WTC11 (cell line): ENCODE measurements at regions of chr1 and their contacts with region 1.

Region 1: DNA sequence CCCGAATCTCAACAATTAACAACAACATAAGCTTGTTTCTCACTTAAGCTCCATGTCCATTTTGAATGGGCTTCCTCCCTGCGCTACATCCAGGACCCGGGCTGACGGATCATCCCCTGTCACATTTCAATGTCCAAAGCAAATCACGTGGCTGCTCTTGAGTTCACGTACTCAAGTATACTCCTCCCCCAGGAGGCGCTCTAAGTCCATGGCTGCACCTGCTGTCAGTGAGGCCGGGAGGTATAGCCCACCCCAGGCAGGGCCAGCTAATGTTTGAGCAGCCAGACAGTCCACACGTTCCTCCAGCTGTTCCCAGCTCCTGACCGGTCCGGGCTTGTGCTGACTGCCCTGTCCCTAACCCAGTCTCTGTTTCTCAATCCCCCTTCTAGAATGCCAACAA is 220.8 kb downstream of the SLC35F3 start:
- DNase-seq: peak; percentile 90
- ATAC-seq: peak; percentile 100
- H3K4me3 Mint-ChIP-seq: peak overlapping the region; percentile 10; the same call in 1 of the 2 replicates
- H3K27ac Mint-ChIP-seq: no peak overlapping the region
- H3K4me1 Mint-ChIP-seq: peaks cover 7% of the 10 kb centered on the region
- H3K27me3 Mint-ChIP-seq: peaks cover 6% of the 10 kb centered on the region
- CTCF ChIP-seq: peak; percentile 58

Region 2: DNA sequence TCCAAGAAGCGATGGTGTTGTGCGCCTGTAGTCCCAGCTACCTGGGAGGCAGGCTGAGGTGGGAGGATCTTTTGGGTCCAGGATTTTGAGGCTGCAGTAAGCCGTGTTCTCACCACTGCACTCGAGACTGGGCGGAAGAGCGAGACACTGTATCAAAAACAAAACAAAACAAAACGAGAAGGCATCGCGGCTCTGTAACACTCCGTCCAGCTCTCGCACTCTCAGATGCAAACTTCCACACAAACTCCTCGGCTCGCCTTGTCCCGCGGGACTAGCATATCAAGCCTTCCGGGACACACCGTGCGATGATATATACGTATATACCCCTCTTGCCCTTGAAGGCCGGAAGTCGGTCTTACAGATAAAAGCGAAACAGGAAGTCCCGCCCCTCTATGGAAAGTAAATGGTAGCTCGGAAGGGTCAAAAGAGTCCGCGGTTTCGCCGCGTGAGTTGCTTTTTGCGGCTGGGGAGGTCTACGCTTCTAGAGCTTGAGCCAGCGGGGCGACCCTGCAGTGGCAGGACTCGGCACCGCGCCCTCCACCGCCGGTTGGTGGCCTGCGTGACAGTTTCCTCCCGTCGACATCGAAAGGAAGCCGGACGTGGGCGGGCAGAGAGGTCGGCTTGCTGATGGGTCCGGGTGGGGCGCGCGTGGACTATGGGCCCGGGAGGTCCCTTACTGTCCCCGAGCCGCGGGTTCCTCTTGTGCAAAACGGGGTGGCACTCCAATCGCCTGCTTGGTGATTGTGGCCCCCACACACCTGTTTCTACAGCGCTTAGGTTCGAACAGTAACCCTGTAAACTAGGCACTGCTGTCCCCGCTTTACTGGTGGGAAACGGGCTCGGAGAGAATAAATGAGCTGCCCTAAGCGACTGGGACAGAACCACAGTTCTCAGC is 248.0 kb after region 1 on chr1 and contains the start of gene COA6:
- CTCF ChIA-PET with region 1: interaction called, 11 read pairs
- POLR2A ChIA-PET with region 1: no interaction called
- DNase-seq: peak; percentile 81
- ATAC-seq: peak; percentile 92
- H3K4me3 Mint-ChIP-seq: peak within 1 kb of the TSS; percentile 98
- H3K27ac Mint-ChIP-seq: peak within 1 kb of the TSS; percentile 97
- H3K4me1 Mint-ChIP-seq: peaks cover 12% of the 10 kb centered on the region
- H3K27me3 Mint-ChIP-seq: no peaks in the 10 kb centered on the region
- CTCF ChIP-seq: no peak
- total RNA-seq, gene COA6: 41.6 to 47.9 TPM (median 44.3 TPM) in 3 replicates